ENCODE measurements at regions of chr2 and their contacts with region 1.

Region 1: DNA sequence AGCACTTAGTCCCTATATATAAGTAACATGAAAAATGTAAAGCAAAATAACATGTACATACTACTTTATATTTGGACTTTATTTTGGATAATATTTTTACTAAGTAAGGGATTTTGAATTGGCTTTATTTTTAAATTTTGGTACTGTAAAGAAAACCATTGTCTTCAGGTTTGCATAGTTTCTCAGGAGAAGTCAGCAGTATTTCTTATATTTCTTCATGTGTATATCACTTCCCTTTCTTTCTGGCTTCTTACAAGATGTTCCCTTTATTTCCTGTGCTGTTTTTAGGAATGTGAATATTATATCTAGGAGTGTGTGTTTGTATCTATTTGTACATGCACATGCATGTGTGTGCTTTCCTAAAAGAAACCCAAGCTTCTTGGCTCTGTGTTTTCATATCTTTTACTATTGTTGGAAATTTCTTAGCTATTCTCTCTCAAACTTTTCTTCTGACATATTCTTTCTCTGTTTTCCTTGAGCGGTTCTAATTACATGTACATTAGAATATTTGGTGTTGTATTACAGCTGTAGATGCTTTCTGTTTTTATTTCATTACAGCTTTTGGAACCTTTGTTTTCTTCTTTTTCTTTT is 1549.7 kb upstream of the ACVR2A start:
- DNase-seq: no peak
- ATAC-seq: no peak
- H3K4me3 ChIP-seq: no peak overlapping the region
- H3K27ac ChIP-seq: no peak overlapping the region
- H3K4me1 ChIP-seq: no peaks in the 10 kb centered on the region
- H3K27me3 ChIP-seq: no peaks in the 10 kb centered on the region
- CTCF ChIP-seq: no peak
- POLR2A ChIP-seq: no peak
- RAD21 ChIP-seq: no peak

Region 2: GRCh38 chr2:146370826-146371225 is 75.7 kb after region 1 on chr2:
- CTCF ChIA-PET with region 1: interaction called, 3 read pairs
- POLR2A ChIA-PET with region 1: interaction called, 25 read pairs
- dilution Hi-C with region 1: no loop called
- in situ Hi-C with region 1: no loop called
- intact Hi-C with region 1: no loop called
- DNase-seq: peak; percentile 41
- ATAC-seq: peak; percentile 69; the same call in 1 of the 2 replicates
- H3K4me3 ChIP-seq: no peak overlapping the region
- H3K27ac ChIP-seq: no peak overlapping the region
- H3K4me1 ChIP-seq: 0 out of 2 replicates have a peak, but pooled peaks cover 2% of the 10 kb centered on the region
- H3K27me3 ChIP-seq: no peaks in the 10 kb centered on the region
- CTCF ChIP-seq: no peak
- POLR2A ChIP-seq: no peak
- RAD21 ChIP-seq: no peak

Measured in IMR-90 (cell line).